ENCODE measurements at regions of chr13 and their contacts with region 1.

Region 1: DNA sequence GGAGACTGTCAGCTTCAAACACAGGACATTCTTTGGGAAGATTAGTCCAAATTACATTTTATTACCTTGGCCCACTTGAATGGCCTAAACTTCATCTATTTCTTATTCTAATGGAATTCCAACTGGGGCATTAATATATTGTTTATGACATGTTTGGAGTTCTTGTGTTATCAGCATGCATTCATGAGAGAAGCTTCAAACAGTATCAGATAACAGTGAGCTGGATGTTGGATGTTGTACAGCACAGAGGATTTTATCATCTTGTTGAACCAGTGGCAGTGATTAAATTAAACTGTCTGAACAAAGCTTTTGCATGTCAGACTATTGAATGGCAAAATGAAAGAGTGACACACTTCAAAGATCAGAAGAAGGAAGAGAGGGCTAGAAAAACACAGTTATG is 50.0 kb downstream of the MZT1 start:
- DNase-seq: no peak
- H3K4me3 ChIP-seq: no peak overlapping the region
- H3K27ac ChIP-seq: no peak overlapping the region
- H3K4me1 ChIP-seq: no peaks in the 10 kb centered on the region
- H3K27me3 ChIP-seq: no peaks in the 10 kb centered on the region
- CTCF ChIP-seq: no peak
- POLR2A ChIP-seq: no peak

Region 2: GRCh38 chr13:71902676-71903075 is 774.8 kb before region 1 on chr13:
- intact Hi-C with region 1: loop called (anchors 5 kb)
- DNase-seq: no peak
- H3K4me3 ChIP-seq: no peak overlapping the region
- H3K27ac ChIP-seq: no peak overlapping the region
- H3K4me1 ChIP-seq: no peaks in the 10 kb centered on the region
- H3K27me3 ChIP-seq: no peaks in the 10 kb centered on the region
- CTCF ChIP-seq: no peak
- POLR2A ChIP-seq: no peak

Region 3: GRCh38 chr13:72651144-72651543 is 26.3 kb before region 1 on chr13:
- intact Hi-C with region 1: no loop called
- DNase-seq: no peak
- H3K4me3 ChIP-seq: no peak overlapping the region
- H3K27ac ChIP-seq: no peak overlapping the region
- H3K4me1 ChIP-seq: no peaks in the 10 kb centered on the region
- H3K27me3 ChIP-seq: no peaks in the 10 kb centered on the region
- CTCF ChIP-seq: no peak
- POLR2A ChIP-seq: no peak